Activated CD4-positive, alpha-beta T cell treated with anti-CD3 and anti-CD28 coated beads for 36 hours (primary cell): ENCODE measurements at regions of chr11 and their contacts with region 1.

Region 1: DNA sequence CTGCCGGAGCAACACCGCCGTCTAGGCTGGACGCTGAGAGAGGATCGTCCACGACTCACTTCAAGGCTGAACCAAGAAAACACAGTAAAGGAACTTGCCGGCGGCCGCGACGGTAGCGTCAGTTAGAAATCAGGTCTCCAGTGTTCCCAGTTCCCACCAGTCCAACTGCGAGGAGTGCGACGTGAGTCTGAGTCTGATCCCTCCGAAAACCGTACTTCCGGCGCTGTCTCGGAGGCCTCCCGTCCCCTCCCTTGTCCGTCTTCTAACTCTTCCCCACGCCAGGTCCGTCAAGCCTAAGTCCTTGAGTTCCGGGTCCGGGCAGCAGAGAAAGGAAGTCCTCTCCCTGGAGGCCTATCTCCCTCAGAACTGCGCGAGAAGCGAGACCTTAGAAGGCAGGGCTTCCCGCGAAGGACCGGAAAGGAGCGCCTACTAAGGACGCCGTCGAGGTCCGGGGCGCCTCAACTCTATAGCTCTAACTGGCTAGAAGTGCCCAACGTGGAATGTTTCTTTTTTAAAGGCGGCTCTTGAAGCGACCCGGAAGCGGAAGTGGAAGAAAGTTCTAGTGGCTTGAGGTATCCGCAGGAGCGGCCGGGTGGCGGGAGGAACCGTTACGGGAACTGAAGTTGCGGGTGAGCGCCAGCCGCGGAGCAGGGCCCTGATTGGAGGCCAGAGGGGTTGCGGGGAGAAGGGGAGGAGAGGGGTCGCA is at the starts of genes BANF1 and EIF1AD:
- DNase-seq: peak; percentile 95
- ATAC-seq: peak; percentile 88
- H3K4me3 Mint-ChIP-seq: peak within 1 kb of the TSS; percentile 100
- H3K27ac Mint-ChIP-seq: peak within 1 kb of the TSS; percentile 98
- H3K4me1 Mint-ChIP-seq: peaks cover 36% of the 10 kb centered on the region
- H3K27me3 Mint-ChIP-seq: no peaks in the 10 kb centered on the region
- total RNA-seq, gene BANF1: 233 to 293 TPM
- total RNA-seq, gene EIF1AD: 45.1 to 52.2 TPM

Region 2: GRCh38 chr11:65524741-65525545 is 477.2 kb before region 1 on chr11 and contains the start of gene SCYL1:
- CTCF ChIA-PET with region 1: no interaction called
- POLR2A ChIA-PET with region 1: no interaction called
- intact Hi-C with region 1: loop called in 1 of 2 experiments (anchors 1 kb)
- DNase-seq: peak; percentile 91
- ATAC-seq: peak; percentile 85
- H3K4me3 Mint-ChIP-seq: peak within 1 kb of the TSS; percentile 86
- H3K27ac Mint-ChIP-seq: peak within 1 kb of the TSS; percentile 93
- H3K4me1 Mint-ChIP-seq: peaks cover 51% of the 10 kb centered on the region
- H3K27me3 Mint-ChIP-seq: no peaks in the 10 kb centered on the region
- total RNA-seq, gene SCYL1: 66.5 to 78.8 TPM

Region 3: GRCh38 chr11:65779851-65780577 is 222.1 kb before region 1 on chr11:
- CTCF ChIA-PET with region 1: no interaction called
- POLR2A ChIA-PET with region 1: interaction called, 3 read pairs
- intact Hi-C with region 1: loop called in 1 of 2 experiments (anchors 1 kb)
- DNase-seq: peak; percentile 94
- ATAC-seq: peak; percentile 81
- H3K4me3 Mint-ChIP-seq: peak overlapping the region; percentile 87
- H3K27ac Mint-ChIP-seq: peak overlapping the region; percentile 83
- H3K4me1 Mint-ChIP-seq: peaks cover 27% of the 10 kb centered on the region
- H3K27me3 Mint-ChIP-seq: peaks cover 10% of the 10 kb centered on the region

Region 4: GRCh38 chr11:65900125-65900898 is 101.8 kb before region 1 on chr11 and contains the start of gene FOSL1:
- CTCF ChIA-PET with region 1: no interaction called
- POLR2A ChIA-PET with region 1: interaction called, 3 read pairs
- intact Hi-C with region 1: loop called in 1 of 2 experiments (anchors 1 kb)
- DNase-seq: peak; percentile 98
- ATAC-seq: peak; percentile 85
- H3K4me3 Mint-ChIP-seq: peak within 1 kb of the TSS; percentile 75
- H3K27ac Mint-ChIP-seq: peak within 1 kb of the TSS; percentile 78
- H3K4me1 Mint-ChIP-seq: peaks cover 35% of the 10 kb centered on the region
- H3K27me3 Mint-ChIP-seq: peaks cover 4% of the 10 kb centered on the region
- total RNA-seq, gene FOSL1: 11.1 to 11.3 TPM

Region 5: DNA sequence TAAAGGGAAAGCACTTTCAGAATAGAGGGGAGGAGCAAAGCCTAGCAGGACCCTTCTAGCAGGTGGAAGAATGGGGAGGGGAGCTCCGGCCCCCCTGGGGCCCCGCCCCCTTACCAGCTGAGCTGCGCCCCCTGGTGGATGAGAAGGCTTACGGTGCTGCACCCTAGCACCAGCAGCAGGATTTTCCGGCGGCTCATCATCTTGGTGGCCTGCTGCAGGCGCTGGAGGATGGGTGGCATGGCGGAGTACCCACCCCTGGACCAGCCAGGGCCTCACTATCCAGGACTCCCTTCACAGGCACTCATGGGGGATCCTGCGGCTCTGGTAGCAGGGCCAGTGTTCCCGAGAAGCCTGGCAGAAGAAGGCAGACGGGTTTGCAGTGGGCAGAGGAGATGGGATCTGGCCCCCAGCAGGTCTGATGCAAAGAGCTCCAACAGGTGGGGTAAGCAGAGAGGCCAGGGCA is 43.1 kb after region 1 on chr11:
- CTCF ChIA-PET with region 1: interaction called, 5 read pairs
- POLR2A ChIA-PET with region 1: interaction called, 5 read pairs
- intact Hi-C with region 1: loop called (anchors 2 to 5 kb)
- DNase-seq: peak; percentile 91
- ATAC-seq: peak; percentile 93
- H3K4me3 Mint-ChIP-seq: peak overlapping the region; percentile 21
- H3K27ac Mint-ChIP-seq: no peak overlapping the region
- H3K4me1 Mint-ChIP-seq: peaks cover 22% of the 10 kb centered on the region
- H3K27me3 Mint-ChIP-seq: peaks cover 4% of the 10 kb centered on the region

Region 6: GRCh38 chr11:66183494-66184048 is 181.5 kb after region 1 on chr11:
- CTCF ChIA-PET with region 1: no interaction called
- POLR2A ChIA-PET with region 1: no interaction called
- intact Hi-C with region 1: no loop called
- DNase-seq: no peak
- ATAC-seq: peak; percentile 16
- H3K4me3 Mint-ChIP-seq: no peak overlapping the region
- H3K27ac Mint-ChIP-seq: no peak overlapping the region
- H3K4me1 Mint-ChIP-seq: peaks cover 46% of the 10 kb centered on the region
- H3K27me3 Mint-ChIP-seq: no peaks in the 10 kb centered on the region

Region 7: GRCh38 chr11:66288671-66289547 is 286.8 kb after region 1 on chr11 and contains the start of gene YIF1A:
- CTCF ChIA-PET with region 1: no interaction called
- POLR2A ChIA-PET with region 1: no interaction called
- intact Hi-C with region 1: loop called in 1 of 2 experiments (anchors 1 kb)
- DNase-seq: peak; percentile 99
- ATAC-seq: peak; percentile 97
- H3K4me3 Mint-ChIP-seq: peak within 1 kb of the TSS; percentile 89
- H3K27ac Mint-ChIP-seq: peak within 1 kb of the TSS; percentile 85
- H3K4me1 Mint-ChIP-seq: peaks cover 22% of the 10 kb centered on the region
- H3K27me3 Mint-ChIP-seq: peaks cover 8% of the 10 kb centered on the region
- total RNA-seq, gene YIF1A: 47.5 to 49.8 TPM